ENCODE measurements at regions of chr11 and their contacts with region 1.

Region 1: GRCh38 chr11:82959987-82960778 is 58.6 kb downstream of the DDIAS start:
- DNase-seq: peak in 7 of 9 donors; percentile 71 to 89 (median 86)
- ATAC-seq: peak; percentile 92
- H3K4me3 ChIP-seq: peak overlapping the region; percentile 37
- H3K4me3 Mint-ChIP-seq: peak overlapping the region; percentile 52 to 88 (median 80)
- H3K27ac ChIP-seq: peak overlapping the region; percentile 74
- H3K27ac Mint-ChIP-seq: peak overlapping the region; percentile 84 to 99 (median 98)
- H3K4me1 ChIP-seq: peaks cover 49 to 82% of the 10 kb centered on the region in 2 donors
- H3K4me1 Mint-ChIP-seq: peaks cover 37 to 96% (median 90%) of the 10 kb centered on the region in 7 donors
- H3K27me3 ChIP-seq: no peaks in the 10 kb centered on the region
- H3K27me3 Mint-ChIP-seq: peaks cover 0 to 8% (median 0%) of the 10 kb centered on the region in 5 donors

Region 2: GRCh38 chr11:82653752-82654151 is 306.4 kb before region 1 on chr11:
- CTCF ChIA-PET with region 1: no interaction called
- POLR2A ChIA-PET with region 1: no interaction called
- intact Hi-C with region 1: no loop called
- DNase-seq: no peak
- ATAC-seq: no peak
- H3K4me3 ChIP-seq: no peak overlapping the region
- H3K4me3 Mint-ChIP-seq: no peak overlapping the region
- H3K27ac ChIP-seq: no peak overlapping the region
- H3K27ac Mint-ChIP-seq: no peak overlapping the region
- H3K4me1 ChIP-seq: no peaks in the 10 kb centered on the region
- H3K4me1 Mint-ChIP-seq: no peaks in the 10 kb centered on the region
- H3K27me3 ChIP-seq: no peaks in the 10 kb centered on the region
- H3K27me3 Mint-ChIP-seq: peaks cover 3 to 45% (median 32%) of the 10 kb centered on the region in 5 donors

Region 3: DNA sequence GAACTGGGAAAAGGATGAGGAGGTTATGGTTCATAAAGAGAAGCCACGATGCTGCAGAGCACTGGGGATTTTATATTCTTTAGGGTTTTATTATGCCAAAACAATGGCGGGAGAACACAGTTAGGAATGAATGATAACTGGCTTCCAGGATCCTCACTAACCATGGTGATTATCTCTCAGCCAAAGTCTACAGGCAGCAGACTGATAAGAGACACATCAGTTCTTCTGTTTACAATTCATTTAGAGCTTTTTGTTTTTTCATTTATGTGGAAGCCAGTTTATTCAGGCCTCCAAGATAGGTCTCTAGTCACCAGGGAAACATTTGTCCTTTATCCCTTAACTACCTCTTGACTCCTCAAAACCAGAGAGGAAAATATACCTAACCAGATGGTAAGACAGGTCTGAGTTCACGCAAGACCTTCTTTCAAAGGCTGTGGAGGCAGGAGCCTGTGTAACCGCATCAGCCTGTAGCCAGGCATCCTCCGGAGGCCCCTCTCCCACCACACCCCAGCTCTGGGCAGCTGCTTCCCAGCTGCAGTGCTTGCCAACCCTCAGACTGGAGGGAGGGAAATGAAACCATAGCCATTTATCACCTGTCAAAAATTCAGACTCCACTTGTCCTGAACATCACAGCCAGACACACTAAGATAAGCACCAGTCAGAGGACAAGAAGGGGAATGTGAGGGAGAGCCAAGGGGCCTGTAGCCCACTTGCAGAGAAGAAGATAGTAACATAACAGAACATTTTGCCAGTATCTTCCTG is 169.3 kb before region 1 on chr11:
- CTCF ChIA-PET with region 1: no interaction called
- POLR2A ChIA-PET with region 1: no interaction called
- intact Hi-C with region 1: no loop called
- DNase-seq: no peak
- ATAC-seq: peak; percentile 27
- H3K4me3 ChIP-seq: no peak overlapping the region
- H3K4me3 Mint-ChIP-seq: no peak overlapping the region
- H3K27ac ChIP-seq: no peak overlapping the region
- H3K27ac Mint-ChIP-seq: no peak overlapping the region
- H3K4me1 ChIP-seq: no peaks in the 10 kb centered on the region
- H3K4me1 Mint-ChIP-seq: peaks cover 0 to 6% (median 0%) of the 10 kb centered on the region in 7 donors
- H3K27me3 ChIP-seq: no peaks in the 10 kb centered on the region
- H3K27me3 Mint-ChIP-seq: peaks cover 0 to 2% (median 0%) of the 10 kb centered on the region in 5 donors

Region 4: GRCh38 chr11:82927254-82927880 is 32.8 kb before region 1 on chr11:
- CTCF ChIA-PET with region 1: interaction called, 12 read pairs
- POLR2A ChIA-PET with region 1: interaction called, 27 read pairs
- intact Hi-C with region 1: loop called (anchors 1 kb)
- DNase-seq: peak in 7 of 9 donors; percentile 51 to 77 (median 67)
- ATAC-seq: peak; percentile 89
- H3K4me3 ChIP-seq: no peak overlapping the region
- H3K4me3 Mint-ChIP-seq: peak overlapping the region in 2 of 10 donors; percentile 10 to 63
- H3K27ac ChIP-seq: no peak overlapping the region
- H3K27ac Mint-ChIP-seq: peak overlapping the region in 8 of 9 donors; percentile 26 to 76 (median 52)
- H3K4me1 ChIP-seq: peaks cover 0 to 23% of the 10 kb centered on the region in 2 donors
- H3K4me1 Mint-ChIP-seq: peaks cover 10 to 55% (median 45%) of the 10 kb centered on the region in 7 donors
- H3K27me3 ChIP-seq: no peaks in the 10 kb centered on the region
- H3K27me3 Mint-ChIP-seq: no peaks in the 10 kb centered on the region

Region 5: GRCh38 chr11:82978422-82979099 is 18.4 kb after region 1 on chr11:
- CTCF ChIA-PET with region 1: no interaction called
- POLR2A ChIA-PET with region 1: interaction called, 3 read pairs
- intact Hi-C with region 1: loop called in 1 of 2 experiments (anchors 2 kb)
- DNase-seq: no peak
- ATAC-seq: no peak
- H3K4me3 ChIP-seq: no peak overlapping the region
- H3K4me3 Mint-ChIP-seq: peak overlapping the region in 3 of 10 donors; percentile 7 to 18 (median 13)
- H3K27ac ChIP-seq: no peak overlapping the region
- H3K27ac Mint-ChIP-seq: peak overlapping the region in 5 of 9 donors; percentile 1 to 59 (median 33)
- H3K4me1 ChIP-seq: peaks cover 0 to 5% of the 10 kb centered on the region in 2 donors
- H3K4me1 Mint-ChIP-seq: peaks cover 2 to 31% (median 23%) of the 10 kb centered on the region in 7 donors
- H3K27me3 ChIP-seq: no peaks in the 10 kb centered on the region
- H3K27me3 Mint-ChIP-seq: peaks cover 0 to 5% (median 0%) of the 10 kb centered on the region in 5 donors

Region 6: GRCh38 chr11:83007909-83008580 is 47.9 kb after region 1 on chr11:
- CTCF ChIA-PET with region 1: no interaction called
- POLR2A ChIA-PET with region 1: interaction called, 6 read pairs
- intact Hi-C with region 1: loop called (anchors 5 kb)
- DNase-seq: no peak
- ATAC-seq: peak; percentile 29
- H3K4me3 ChIP-seq: no peak overlapping the region
- H3K4me3 Mint-ChIP-seq: peak overlapping the region in 6 of 10 donors; percentile 6 to 52 (median 27)
- H3K27ac ChIP-seq: no peak overlapping the region
- H3K27ac Mint-ChIP-seq: peak overlapping the region in 5 of 9 donors; percentile 6 to 49 (median 42)
- H3K4me1 ChIP-seq: peaks cover 0 to 8% of the 10 kb centered on the region in 2 donors
- H3K4me1 Mint-ChIP-seq: peaks cover 13 to 49% (median 38%) of the 10 kb centered on the region in 7 donors
- H3K27me3 ChIP-seq: no peaks in the 10 kb centered on the region
- H3K27me3 Mint-ChIP-seq: no peaks in the 10 kb centered on the region

Region 7: DNA sequence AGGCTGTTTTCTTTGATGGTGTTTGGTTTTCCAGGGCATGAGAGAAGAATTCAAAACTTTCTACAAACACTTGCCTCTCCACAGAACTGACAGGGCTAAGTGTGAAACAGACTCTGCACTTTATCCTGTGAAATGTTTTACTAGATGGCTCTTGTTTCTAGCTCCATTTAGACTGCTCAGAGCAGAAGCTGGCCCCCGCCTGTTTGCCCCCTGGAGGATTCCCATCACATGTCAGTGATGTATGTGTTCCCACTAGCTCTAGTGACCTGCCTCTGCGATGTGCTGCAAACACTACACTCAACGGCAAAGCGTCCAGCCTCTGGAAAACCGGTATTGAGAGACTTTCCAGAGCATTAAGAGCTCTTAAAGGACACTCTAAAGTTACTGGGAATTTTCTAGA is 155.4 kb after region 1 on chr11:
- CTCF ChIA-PET with region 1: no interaction called
- POLR2A ChIA-PET with region 1: no interaction called
- intact Hi-C with region 1: loop called in 1 of 2 experiments (anchors 1 kb)
- DNase-seq: no peak
- ATAC-seq: no peak
- H3K4me3 ChIP-seq: peak overlapping the region; percentile 20
- H3K4me3 Mint-ChIP-seq: peak overlapping the region; percentile 41 to 86 (median 74)
- H3K27ac ChIP-seq: no peak overlapping the region
- H3K27ac Mint-ChIP-seq: peak overlapping the region in 7 of 9 donors; percentile 12 to 98 (median 68)
- H3K4me1 ChIP-seq: peaks cover 27 to 36% of the 10 kb centered on the region in 2 donors
- H3K4me1 Mint-ChIP-seq: peaks cover 9 to 62% (median 56%) of the 10 kb centered on the region in 7 donors
- H3K27me3 ChIP-seq: no peaks in the 10 kb centered on the region
- H3K27me3 Mint-ChIP-seq: no peaks in the 10 kb centered on the region

Region 8: GRCh38 chr11:83285771-83286528 is 325.8 kb after region 1 on chr11 and contains the start of gene CCDC90B:
- CTCF ChIA-PET with region 1: no interaction called
- POLR2A ChIA-PET with region 1: interaction called, 4 read pairs
- intact Hi-C with region 1: loop called in 1 of 2 experiments (anchors 1 kb)
- DNase-seq: peak; percentile 83 to 97 (median 96)
- ATAC-seq: peak; percentile 93
- H3K4me3 ChIP-seq: peak within 1 kb of the TSS; percentile 93
- H3K4me3 Mint-ChIP-seq: peak within 1 kb of the TSS; percentile 92 to 100 (median 98)
- H3K27ac ChIP-seq: peak within 1 kb of the TSS; percentile 95
- H3K27ac Mint-ChIP-seq: peak within 1 kb of the TSS; percentile 98 to 100 (median 99)
- H3K4me1 ChIP-seq: peaks cover 14 to 23% of the 10 kb centered on the region in 2 donors
- H3K4me1 Mint-ChIP-seq: peaks cover 19 to 52% (median 36%) of the 10 kb centered on the region in 7 donors
- H3K27me3 ChIP-seq: no peaks in the 10 kb centered on the region
- H3K27me3 Mint-ChIP-seq: peaks cover 0 to 11% (median 0%) of the 10 kb centered on the region in 5 donors
- total RNA-seq, gene CCDC90B: 19.1 to 40.8 (median 27.8) TPM

Measured in naive thymus-derived CD4-positive, alpha-beta T cell (primary cell).